ENCODE measurements at regions of chr6 and their contacts with region 1.

Region 1: GRCh38 chr6:96897383-96898240 is at the start of gene NDUFAF4:
- DNase-seq: peak; percentile 95
- H3K4me3 Mint-ChIP-seq: peak within 1 kb of the TSS; percentile 95
- H3K27ac Mint-ChIP-seq: peak within 1 kb of the TSS; percentile 93
- H3K4me1 Mint-ChIP-seq: peaks cover 31% of the 10 kb centered on the region
- H3K27me3 Mint-ChIP-seq: peaks cover 4% of the 10 kb centered on the region
- total RNA-seq, gene NDUFAF4: 23.3 to 26.1 TPM

Region 2: GRCh38 chr6:96837081-96837971 is 60.3 kb before region 1 on chr6 and contains the start of gene GPR63:
- CTCF ChIA-PET with region 1: interaction called, 3 read pairs
- POLR2A ChIA-PET with region 1: interaction called, 10 read pairs
- DNase-seq: peak; percentile 89
- H3K4me3 Mint-ChIP-seq: peak within 1 kb of the TSS; percentile 94
- H3K27ac Mint-ChIP-seq: peak within 1 kb of the TSS; percentile 79
- H3K4me1 Mint-ChIP-seq: peaks cover 32% of the 10 kb centered on the region
- H3K27me3 Mint-ChIP-seq: peaks cover 19% of the 10 kb centered on the region
- total RNA-seq, gene GPR63: 3.5 to 3.7 TPM

Region 3: GRCh38 chr6:96934087-96934486 is 36.5 kb after region 1 on chr6:
- CTCF ChIA-PET with region 1: no interaction called
- POLR2A ChIA-PET with region 1: no interaction called
- DNase-seq: no peak
- H3K4me3 Mint-ChIP-seq: no peak overlapping the region
- H3K27ac Mint-ChIP-seq: no peak overlapping the region
- H3K4me1 Mint-ChIP-seq: peaks cover 6% of the 10 kb centered on the region
- H3K27me3 Mint-ChIP-seq: no peaks in the 10 kb centered on the region